Ovary (tissue), 10 donors: ENCODE measurements at regions of chr7 and their contacts with region 1.

Region 1: DNA sequence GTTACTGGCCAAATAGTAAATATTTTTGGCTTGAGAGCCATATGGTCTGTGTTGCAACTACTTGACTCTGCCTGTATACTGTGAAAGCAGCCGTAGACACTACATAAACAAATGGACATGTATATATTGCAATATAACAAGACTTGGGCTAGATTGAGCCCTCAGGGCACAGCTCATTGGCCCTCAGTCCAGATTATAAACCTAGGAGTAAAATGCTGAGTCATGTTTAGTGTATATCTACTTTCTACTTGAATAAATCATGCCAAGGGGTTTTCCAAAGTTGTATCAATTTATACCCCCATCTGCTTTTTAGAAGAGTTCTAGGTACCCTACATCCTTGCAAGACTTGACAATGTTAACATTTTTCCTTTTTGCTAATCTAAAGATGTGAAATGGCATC is 27.4 kb upstream of the POU6F2 start:
- DNase-seq: no peak
- H3K4me3 ChIP-seq: no peak overlapping the region
- H3K27ac ChIP-seq: no peak overlapping the region
- H3K4me1 ChIP-seq: no peaks in the 10 kb centered on the region
- H3K27me3 ChIP-seq: no peaks in the 10 kb centered on the region
- CTCF ChIP-seq: no peak
- EP300 ChIP-seq: no peak
- POLR2A ChIP-seq: no peak

Region 2: GRCh38 chr7:38889861-38890432 is 60.4 kb before region 1 on chr7:
- intact Hi-C with region 1: loop called in 1 of 4 experiments (anchors 10 kb)
- DNase-seq: no peak
- H3K4me3 ChIP-seq: no peak overlapping the region
- H3K27ac ChIP-seq: no peak overlapping the region
- H3K4me1 ChIP-seq: no peaks in the 10 kb centered on the region
- H3K27me3 ChIP-seq: no peaks in the 10 kb centered on the region
- CTCF ChIP-seq: no peak
- EP300 ChIP-seq: no peak
- POLR2A ChIP-seq: no peak

Region 3: DNA sequence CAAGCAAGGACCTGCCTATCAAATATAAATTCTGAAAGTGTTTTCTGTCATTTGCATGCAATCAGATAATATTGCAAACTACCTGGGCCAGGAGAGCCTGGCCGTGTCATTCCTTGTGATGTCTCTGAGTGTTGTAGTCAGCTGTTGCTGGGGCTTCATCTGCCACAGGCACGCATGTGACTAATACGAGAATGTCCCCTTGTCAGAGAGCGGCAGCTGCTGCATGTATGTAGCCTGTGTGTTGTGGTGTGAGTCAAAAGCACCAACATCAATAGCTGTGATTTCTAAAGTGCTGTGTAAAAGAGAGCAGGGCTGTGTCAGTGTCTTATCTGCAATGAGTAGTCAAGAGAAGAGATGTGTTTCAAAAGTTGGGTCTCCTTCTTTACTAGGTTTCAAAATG is 182.8 kb after region 1 on chr7:
- intact Hi-C with region 1: no loop called
- DNase-seq: no peak
- H3K4me3 ChIP-seq: no peak overlapping the region
- H3K27ac ChIP-seq: no peak overlapping the region
- H3K4me1 ChIP-seq: no peaks in the 10 kb centered on the region
- H3K27me3 ChIP-seq: peaks cover 2% of the 10 kb centered on the region
- CTCF ChIP-seq: no peak
- EP300 ChIP-seq: no peak
- POLR2A ChIP-seq: no peak

Region 4: DNA sequence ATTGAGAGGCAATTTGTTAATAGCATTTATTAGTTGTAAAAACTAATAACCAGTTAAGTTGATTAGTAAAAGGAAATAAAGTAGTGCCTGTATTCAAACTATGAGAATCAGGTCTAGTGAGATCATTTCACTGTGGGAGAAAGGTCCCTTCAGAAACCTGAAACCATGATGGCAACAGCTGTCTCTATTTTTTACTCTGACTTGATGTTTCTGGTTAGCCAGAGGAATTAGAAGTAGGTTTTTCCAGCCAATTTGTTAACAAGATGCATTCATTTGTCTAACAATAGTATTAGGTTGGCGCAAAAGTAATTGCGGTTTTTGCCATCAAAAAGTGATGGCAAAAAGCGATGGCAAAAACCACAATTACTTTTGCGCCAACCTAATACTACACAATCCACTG is 343.7 kb after region 1 on chr7:
- intact Hi-C with region 1: no loop called
- DNase-seq: no peak
- H3K4me3 ChIP-seq: no peak overlapping the region
- H3K27ac ChIP-seq: no peak overlapping the region
- H3K4me1 ChIP-seq: no peaks in the 10 kb centered on the region
- H3K27me3 ChIP-seq: no peaks in the 10 kb centered on the region
- CTCF ChIP-seq: no peak
- EP300 ChIP-seq: no peak
- POLR2A ChIP-seq: no peak